GM10248 (cell line): ENCODE measurements at regions of chr21 and their contacts with region 1.

Region 1: DNA sequence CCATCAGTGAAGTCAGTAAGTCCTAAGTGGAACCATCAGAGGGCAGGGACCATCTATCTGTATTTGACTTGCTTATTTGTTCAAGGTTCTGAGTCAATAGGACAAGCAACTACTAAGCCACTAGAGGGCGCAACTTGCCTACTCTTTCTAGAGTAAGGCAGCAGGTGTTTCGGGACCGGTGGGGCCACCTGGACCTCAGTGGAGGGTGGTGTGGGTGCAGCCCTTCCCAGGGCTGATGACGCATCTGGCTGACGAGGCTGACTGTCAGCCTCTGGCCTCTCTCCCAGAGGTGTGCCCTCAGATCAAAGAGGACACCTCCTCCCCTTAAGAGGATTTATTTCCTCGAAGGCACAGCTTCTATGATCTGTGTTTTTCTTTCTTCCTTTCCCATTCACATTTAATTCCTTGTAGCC is 6.6 kb downstream of the CBR3 start:
- DNase-seq: peak; percentile 74
- CTCF ChIP-seq: peak; percentile 87

Region 2: DNA sequence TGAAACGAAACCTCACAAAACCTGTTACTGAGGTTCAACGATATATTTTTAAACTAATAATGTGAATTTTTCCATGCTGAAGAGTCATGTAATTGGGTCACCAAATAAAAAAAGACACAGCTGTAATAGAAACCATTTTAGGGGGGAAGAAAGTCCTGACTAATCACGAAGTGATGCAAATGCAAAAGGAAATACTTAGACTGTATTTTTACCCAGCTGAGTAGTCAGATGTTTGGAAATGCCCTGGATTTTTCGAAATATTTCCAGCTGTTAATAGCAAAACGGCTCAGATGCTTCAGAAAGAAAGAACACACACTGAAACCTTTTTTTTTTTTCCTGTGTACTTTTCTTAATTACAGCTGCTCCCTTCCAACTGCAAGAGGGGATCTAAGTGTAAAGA is 291.5 kb before region 1 on chr21:
- CTCF ChIA-PET with region 1: no interaction called
- POLR2A ChIA-PET with region 1: no interaction called
- DNase-seq: no peak
- CTCF ChIP-seq: no peak

Region 3: DNA sequence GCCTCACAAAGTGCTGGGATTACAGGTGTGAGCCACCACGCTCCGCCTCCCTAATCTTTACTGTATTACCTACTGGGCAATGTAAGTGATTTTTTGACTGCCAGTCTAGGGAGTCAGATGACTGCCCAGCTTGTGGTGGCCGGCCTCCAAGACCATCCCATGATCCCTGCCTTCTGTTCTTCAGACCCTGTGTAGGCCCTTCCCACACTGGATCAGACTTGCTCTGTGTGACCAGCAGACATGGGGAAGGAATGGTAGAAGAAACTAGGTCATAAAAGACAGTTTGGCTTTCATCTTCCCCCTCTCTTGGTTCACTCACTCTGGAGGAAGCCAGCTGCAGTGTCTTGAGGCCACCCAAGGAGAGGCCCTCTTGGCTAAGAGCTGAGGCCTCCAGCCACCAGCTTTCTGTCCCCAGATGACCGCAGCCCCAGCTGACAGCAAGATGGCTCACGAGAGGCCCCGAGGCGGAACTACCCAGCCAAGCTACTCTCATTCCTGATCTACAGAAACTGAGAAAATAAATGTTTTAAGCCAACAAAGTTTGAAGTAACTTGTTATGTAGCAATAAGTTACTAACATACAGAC is 21.1 kb before region 1 on chr21:
- CTCF ChIA-PET with region 1: interaction called, 13 read pairs
- POLR2A ChIA-PET with region 1: no interaction called
- DNase-seq: no peak
- CTCF ChIP-seq: no peak

Region 4: GRCh38 chr21:36125512-36126222 is 15.9 kb before region 1 on chr21:
- CTCF ChIA-PET with region 1: interaction called, 13 read pairs
- POLR2A ChIA-PET with region 1: no interaction called
- DNase-seq: peak; percentile 61
- CTCF ChIP-seq: peak; percentile 78

Region 5: GRCh38 chr21:36156339-36156814 is 14.9 kb after region 1 on chr21:
- CTCF ChIA-PET with region 1: interaction called, 61 read pairs
- POLR2A ChIA-PET with region 1: interaction called, 4 read pairs
- DNase-seq: peak; percentile 99
- CTCF ChIP-seq: no peak

Region 6: GRCh38 chr21:36209626-36210171 is 68.2 kb after region 1 on chr21:
- CTCF ChIA-PET with region 1: interaction called, 48 read pairs
- POLR2A ChIA-PET with region 1: no interaction called
- DNase-seq: peak; percentile 55
- CTCF ChIP-seq: peak; percentile 55

Region 7: GRCh38 chr21:36330904-36331303 is 189.4 kb after region 1 on chr21:
- CTCF ChIA-PET with region 1: interaction called, 21 read pairs
- POLR2A ChIA-PET with region 1: interaction called, 4 read pairs
- DNase-seq: peak; percentile 64
- CTCF ChIP-seq: peak; percentile 66